CD8-positive, alpha-beta T cell (primary cell): ENCODE measurements at regions of chr1 and their contacts with region 1.

Region 1: GRCh38 chr1:161045750-161046571 is at the start of gene USF1:
- DNase-seq: peak; percentile 88 to 98 (median 92)
- ATAC-seq: peak; percentile 76
- H3K4me3 ChIP-seq: peak within 1 kb of the TSS; percentile 87 to 96
- H3K4me3 Mint-ChIP-seq: peak within 1 kb of the TSS; percentile 98
- H3K27ac ChIP-seq: peak within 1 kb of the TSS; percentile 82 to 91
- H3K27ac Mint-ChIP-seq: peak within 1 kb of the TSS; percentile 100
- H3K4me1 ChIP-seq: peaks cover 24% of the 10 kb centered on the region
- H3K4me1 Mint-ChIP-seq: peaks cover 50% of the 10 kb centered on the region
- H3K27me3 ChIP-seq: no peaks in the 10 kb centered on the region
- H3K27me3 Mint-ChIP-seq: no peaks in the 10 kb centered on the region
- CTCF ChIP-seq: no peak
- total RNA-seq, gene USF1: 95.6 to 98.8 TPM

Region 2: GRCh38 chr1:160261893-160262794 is 783.8 kb before region 1 on chr1 and contains the start of gene DCAF8:
- CTCF ChIA-PET with region 1: no interaction called
- POLR2A ChIA-PET with region 1: interaction called, 3 read pairs
- intact Hi-C with region 1: loop called (anchors 1 to 5 kb)
- DNase-seq: peak; percentile 97 to 99 (median 98)
- ATAC-seq: peak; percentile 87
- H3K4me3 ChIP-seq: peak within 1 kb of the TSS; percentile 91 to 99
- H3K4me3 Mint-ChIP-seq: peak within 1 kb of the TSS; percentile 96
- H3K27ac ChIP-seq: peak within 1 kb of the TSS; percentile 83 to 99
- H3K27ac Mint-ChIP-seq: peak within 1 kb of the TSS; percentile 98
- H3K4me1 ChIP-seq: peaks cover 31% of the 10 kb centered on the region
- H3K4me1 Mint-ChIP-seq: peaks cover 41% of the 10 kb centered on the region
- H3K27me3 ChIP-seq: no peaks in the 10 kb centered on the region
- H3K27me3 Mint-ChIP-seq: no peaks in the 10 kb centered on the region
- CTCF ChIP-seq: no peak
- total RNA-seq, gene DCAF8: 152 to 162 TPM

Region 3: GRCh38 chr1:161013488-161014230 is 32.3 kb before region 1 on chr1:
- CTCF ChIA-PET with region 1: interaction called, 3 read pairs
- POLR2A ChIA-PET with region 1: interaction called, 12 read pairs
- intact Hi-C with region 1: no loop called
- DNase-seq: peak; percentile 21 to 86 (median 70)
- ATAC-seq: peak; percentile 90
- H3K4me3 ChIP-seq: peak overlapping the region; percentile 34 to 51
- H3K4me3 Mint-ChIP-seq: peak overlapping the region; percentile 78
- H3K27ac ChIP-seq: peak overlapping the region; percentile 32 to 86
- H3K27ac Mint-ChIP-seq: peak overlapping the region; percentile 93
- H3K4me1 ChIP-seq: peaks cover 26% of the 10 kb centered on the region
- H3K4me1 Mint-ChIP-seq: peaks cover 35% of the 10 kb centered on the region
- H3K27me3 ChIP-seq: no peaks in the 10 kb centered on the region
- H3K27me3 Mint-ChIP-seq: no peaks in the 10 kb centered on the region
- CTCF ChIP-seq: no peak

Region 4: GRCh38 chr1:161071886-161072371 is 26.0 kb after region 1 on chr1:
- CTCF ChIA-PET with region 1: interaction called, 121 read pairs
- POLR2A ChIA-PET with region 1: interaction called, 189 read pairs
- intact Hi-C with region 1: loop called (anchors 1 kb)
- DNase-seq: peak; percentile 19 to 75 (median 54)
- ATAC-seq: no peak
- H3K4me3 ChIP-seq: no peak overlapping the region
- H3K4me3 Mint-ChIP-seq: no peak overlapping the region
- H3K27ac ChIP-seq: no peak overlapping the region
- H3K27ac Mint-ChIP-seq: peak overlapping the region; percentile 83
- H3K4me1 ChIP-seq: peaks cover 31% of the 10 kb centered on the region
- H3K4me1 Mint-ChIP-seq: peaks cover 40% of the 10 kb centered on the region
- H3K27me3 ChIP-seq: no peaks in the 10 kb centered on the region
- H3K27me3 Mint-ChIP-seq: no peaks in the 10 kb centered on the region
- CTCF ChIP-seq: peak; percentile 70

Region 5: DNA sequence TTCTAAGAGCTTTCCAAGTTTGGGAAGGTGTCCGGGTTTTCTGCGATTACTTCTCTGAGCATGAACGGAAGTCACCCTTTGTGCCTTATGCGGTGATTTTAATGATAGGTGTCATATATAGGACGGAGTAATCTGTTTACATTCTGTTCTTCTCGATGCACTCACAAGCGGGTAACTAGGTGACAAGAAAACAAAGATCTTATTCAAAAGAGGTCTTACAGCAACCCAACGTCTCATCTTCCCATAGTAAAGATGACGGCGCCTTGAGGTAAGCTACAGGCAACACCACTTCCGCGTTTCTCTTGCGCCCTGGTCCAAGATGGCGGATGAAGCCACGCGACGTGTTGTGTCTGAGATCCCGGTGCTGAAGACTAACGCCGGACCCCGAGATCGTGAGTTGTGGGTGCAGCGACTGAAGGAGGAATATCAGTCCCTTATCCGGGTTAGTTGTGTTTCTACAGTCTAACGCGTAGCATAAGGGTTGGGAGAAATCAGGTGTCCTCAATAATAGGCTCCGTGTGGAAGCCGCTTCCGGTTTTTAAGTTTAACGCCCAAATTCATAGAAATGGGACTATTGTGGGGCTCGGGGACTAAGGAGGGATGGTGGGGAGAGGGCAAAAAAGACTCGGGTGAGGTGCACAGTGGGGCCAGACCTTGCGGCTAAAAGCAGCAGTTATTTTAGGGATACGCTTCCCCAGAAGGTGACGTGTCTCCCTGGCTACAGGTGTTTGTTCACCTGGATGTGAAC is 107.9 kb after region 1 on chr1 and contains the start of gene UFC1:
- CTCF ChIA-PET with region 1: interaction called, 4 read pairs
- POLR2A ChIA-PET with region 1: interaction called, 7 read pairs
- intact Hi-C with region 1: loop called (anchors 1 to 5 kb)
- DNase-seq: peak; percentile 66 to 96 (median 78)
- ATAC-seq: peak; percentile 92
- H3K4me3 ChIP-seq: peak within 1 kb of the TSS; percentile 95 to 98
- H3K4me3 Mint-ChIP-seq: peak within 1 kb of the TSS; percentile 96
- H3K27ac ChIP-seq: peak within 1 kb of the TSS; percentile 98 to 99
- H3K27ac Mint-ChIP-seq: peak within 1 kb of the TSS; percentile 100
- H3K4me1 ChIP-seq: peaks cover 17% of the 10 kb centered on the region
- H3K4me1 Mint-ChIP-seq: peaks cover 30% of the 10 kb centered on the region
- H3K27me3 ChIP-seq: no peaks in the 10 kb centered on the region
- H3K27me3 Mint-ChIP-seq: no peaks in the 10 kb centered on the region
- CTCF ChIP-seq: no peak
- total RNA-seq, gene UFC1: 94.7 to 96.6 TPM